ENCODE measurements at regions of chr12 and their contacts with region 1.

Region 1: GRCh38 chr12:52879394-52880351 is 25.2 kb downstream of the KRT8 start:
- DNase-seq: peak; percentile 59 to 86 (median 70)
- ATAC-seq: peak; percentile 96
- H3K4me3 ChIP-seq: peak overlapping the region; percentile 33
- H3K4me3 Mint-ChIP-seq: peak overlapping the region; percentile 63
- H3K27ac ChIP-seq: no peak overlapping the region
- H3K27ac Mint-ChIP-seq: no peak overlapping the region
- H3K4me1 ChIP-seq: peaks cover 16% of the 10 kb centered on the region
- H3K4me1 Mint-ChIP-seq: peaks cover 12% of the 10 kb centered on the region
- H3K27me3 ChIP-seq: peaks cover 0 to 6% of the 10 kb centered on the region in 2 experiments
- H3K27me3 Mint-ChIP-seq: peaks cover 5% of the 10 kb centered on the region
- CTCF ChIP-seq: peak; percentile 92

Region 2: DNA sequence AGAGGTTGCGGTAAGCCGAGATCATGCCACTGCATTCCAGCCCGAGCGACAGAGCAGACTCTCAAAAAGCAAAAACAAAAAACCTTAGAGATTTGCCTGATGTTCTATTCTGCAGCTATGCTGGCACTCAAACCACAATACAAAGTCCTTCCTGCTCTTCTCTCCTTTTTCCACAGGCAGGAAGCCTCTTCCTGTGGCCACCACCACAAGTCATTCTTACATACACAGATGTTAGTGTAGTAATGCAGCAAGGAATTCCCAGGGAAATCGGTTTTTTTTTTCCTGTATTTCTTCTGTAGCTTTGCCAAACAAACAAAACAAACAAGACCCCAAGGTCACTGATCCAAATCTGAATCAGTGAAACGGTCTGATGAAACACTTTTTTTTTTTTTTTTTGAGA is 1135.4 kb before region 1 on chr12:
- CTCF ChIA-PET with region 1: no interaction called
- POLR2A ChIA-PET with region 1: no interaction called
- intact Hi-C with region 1: no loop called
- DNase-seq: no peak
- ATAC-seq: no peak
- H3K4me3 ChIP-seq: no peak overlapping the region
- H3K4me3 Mint-ChIP-seq: no peak overlapping the region
- H3K27ac ChIP-seq: no peak overlapping the region
- H3K27ac Mint-ChIP-seq: no peak overlapping the region
- H3K4me1 ChIP-seq: no peaks in the 10 kb centered on the region
- H3K4me1 Mint-ChIP-seq: no peaks in the 10 kb centered on the region
- H3K27me3 ChIP-seq: peaks cover 0 to 2% of the 10 kb centered on the region in 2 experiments
- H3K27me3 Mint-ChIP-seq: peaks cover 35% of the 10 kb centered on the region
- CTCF ChIP-seq: no peak

Region 3: GRCh38 chr12:51863933-51864832 is 1015.5 kb before region 1 on chr12:
- CTCF ChIA-PET with region 1: no interaction called
- POLR2A ChIA-PET with region 1: no interaction called
- intact Hi-C with region 1: no loop called
- DNase-seq: peak in 3 of 14 experiments; percentile 19 to 44 (median 39)
- ATAC-seq: peak; percentile 78
- H3K4me3 ChIP-seq: peak overlapping the region; percentile 42
- H3K4me3 Mint-ChIP-seq: peak overlapping the region; percentile 34
- H3K27ac ChIP-seq: no peak overlapping the region
- H3K27ac Mint-ChIP-seq: no peak overlapping the region
- H3K4me1 ChIP-seq: peaks cover 25% of the 10 kb centered on the region
- H3K4me1 Mint-ChIP-seq: peaks cover 13% of the 10 kb centered on the region
- H3K27me3 ChIP-seq: peaks cover 49 to 66% of the 10 kb centered on the region in 2 experiments
- H3K27me3 Mint-ChIP-seq: peaks cover 80% of the 10 kb centered on the region
- CTCF ChIP-seq: no peak

Region 4: DNA sequence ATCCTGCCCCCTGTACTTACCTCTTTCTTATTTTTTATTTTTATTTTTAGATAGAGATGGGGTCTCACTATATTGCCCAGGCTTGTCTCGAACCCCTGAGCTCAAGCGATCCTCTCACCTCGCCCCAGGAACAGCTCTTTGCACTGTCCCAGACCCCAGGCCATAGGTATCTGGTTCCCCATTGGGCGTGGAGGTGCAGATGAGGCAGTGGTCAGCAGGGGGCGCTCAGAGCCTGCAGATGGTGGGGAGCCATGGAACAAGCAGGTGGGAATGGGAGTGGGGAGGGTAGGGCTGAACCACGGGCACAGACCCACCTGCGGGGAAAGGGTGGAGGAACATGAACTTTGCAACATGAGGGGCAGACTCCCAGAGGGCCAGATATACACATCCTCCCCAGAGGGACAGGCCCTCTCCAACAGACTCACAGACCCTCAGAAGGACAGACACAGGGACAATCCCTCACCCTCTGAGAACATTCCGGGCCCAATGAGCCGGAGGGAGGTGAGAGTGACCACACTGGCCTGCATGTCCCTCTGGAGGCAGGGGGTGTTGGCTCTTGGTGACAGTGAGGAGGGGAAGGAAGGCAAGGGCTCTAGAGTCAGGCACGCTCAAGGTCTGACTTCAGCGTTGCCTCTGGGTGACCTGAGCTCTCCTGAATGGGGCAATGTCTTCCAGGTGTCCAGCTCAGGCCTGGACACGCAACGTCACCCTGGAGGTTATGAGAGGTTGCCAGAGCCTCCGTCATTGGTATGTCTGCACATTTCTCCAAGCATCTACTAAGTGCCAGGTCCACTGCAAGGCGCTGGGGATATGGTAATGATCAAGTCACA is 722.7 kb before region 1 on chr12:
- CTCF ChIA-PET with region 1: interaction called, 3 read pairs
- POLR2A ChIA-PET with region 1: no interaction called
- intact Hi-C with region 1: loop called (anchors 1 to 2 kb)
- DNase-seq: peak; percentile 57 to 84 (median 70)
- ATAC-seq: peak; percentile 26
- H3K4me3 ChIP-seq: no peak overlapping the region
- H3K4me3 Mint-ChIP-seq: no peak overlapping the region
- H3K27ac ChIP-seq: no peak overlapping the region
- H3K27ac Mint-ChIP-seq: peak overlapping the region; percentile 1
- H3K4me1 ChIP-seq: peaks cover 65% of the 10 kb centered on the region
- H3K4me1 Mint-ChIP-seq: peaks cover 42% of the 10 kb centered on the region
- H3K27me3 ChIP-seq: no peaks in the 10 kb centered on the region
- H3K27me3 Mint-ChIP-seq: no peaks in the 10 kb centered on the region
- CTCF ChIP-seq: peak; percentile 90

Region 5: DNA sequence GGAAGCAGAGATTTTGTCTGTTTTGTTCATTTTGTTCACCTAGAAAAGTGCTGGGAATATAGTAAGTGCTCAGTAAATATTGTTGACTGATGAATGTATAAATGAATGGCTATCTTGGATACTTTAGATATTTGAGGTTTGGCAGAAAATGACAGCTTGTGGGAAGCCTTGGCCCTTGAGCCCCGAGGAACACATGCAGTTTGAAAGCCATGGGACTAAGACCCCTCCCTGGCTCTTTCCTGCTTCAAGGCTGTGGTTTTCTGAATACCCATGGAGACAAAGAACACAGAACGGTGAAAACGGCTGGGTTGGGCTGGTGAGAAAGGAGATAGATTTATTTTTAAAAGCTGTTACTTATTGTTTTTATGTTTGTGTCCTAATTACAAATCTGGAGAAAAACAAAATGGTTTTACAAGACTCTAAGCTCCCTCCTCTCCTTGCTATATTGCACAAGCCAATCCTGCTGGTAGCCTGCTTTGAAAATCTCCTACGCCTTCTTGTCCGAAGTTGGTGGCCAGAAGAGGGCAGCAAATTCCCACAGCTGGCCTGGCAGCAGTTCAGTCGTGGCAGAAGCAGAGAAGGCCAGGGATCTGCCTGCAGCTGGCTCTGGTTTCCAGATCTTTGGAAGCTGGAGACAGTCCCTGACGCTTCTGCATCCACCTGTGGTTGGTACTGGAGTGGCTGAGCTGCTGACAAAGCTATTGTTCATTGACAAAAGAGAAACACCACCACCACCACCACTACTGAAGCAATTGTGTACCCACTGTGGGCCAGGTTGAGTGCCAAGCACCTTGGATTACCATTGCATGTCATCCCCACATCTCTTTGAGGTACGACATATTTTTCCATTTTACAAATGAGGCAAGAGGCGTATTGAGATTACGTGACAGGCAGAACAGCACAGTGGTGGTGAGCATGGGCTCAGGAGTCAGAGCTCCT is 507.2 kb before region 1 on chr12:
- CTCF ChIA-PET with region 1: interaction called, 3 read pairs
- POLR2A ChIA-PET with region 1: no interaction called
- intact Hi-C with region 1: loop called (anchors 1 kb)
- DNase-seq: peak; percentile 14 to 71 (median 46)
- ATAC-seq: no peak
- H3K4me3 ChIP-seq: no peak overlapping the region
- H3K4me3 Mint-ChIP-seq: no peak overlapping the region
- H3K27ac ChIP-seq: no peak overlapping the region
- H3K27ac Mint-ChIP-seq: no peak overlapping the region
- H3K4me1 ChIP-seq: no peaks in the 10 kb centered on the region
- H3K4me1 Mint-ChIP-seq: no peaks in the 10 kb centered on the region
- H3K27me3 ChIP-seq: peaks cover 2 to 4% of the 10 kb centered on the region in 2 experiments
- H3K27me3 Mint-ChIP-seq: peaks cover 24% of the 10 kb centered on the region
- CTCF ChIP-seq: peak; percentile 53

Region 6: GRCh38 chr12:52542157-52542556 is 337.5 kb before region 1 on chr12:
- CTCF ChIA-PET with region 1: no interaction called
- POLR2A ChIA-PET with region 1: no interaction called
- intact Hi-C with region 1: loop called in 1 of 2 experiments (anchors 1 kb)
- DNase-seq: no peak
- ATAC-seq: no peak
- H3K4me3 ChIP-seq: no peak overlapping the region
- H3K4me3 Mint-ChIP-seq: no peak overlapping the region
- H3K27ac ChIP-seq: no peak overlapping the region
- H3K27ac Mint-ChIP-seq: no peak overlapping the region
- H3K4me1 ChIP-seq: no peaks in the 10 kb centered on the region
- H3K4me1 Mint-ChIP-seq: no peaks in the 10 kb centered on the region
- H3K27me3 ChIP-seq: peaks cover 0 to 3% of the 10 kb centered on the region in 2 experiments
- H3K27me3 Mint-ChIP-seq: no peaks in the 10 kb centered on the region
- CTCF ChIP-seq: no peak

Region 7: GRCh38 chr12:52691076-52691840 is 188.4 kb before region 1 on chr12:
- CTCF ChIA-PET with region 1: interaction called, 4 read pairs
- POLR2A ChIA-PET with region 1: no interaction called
- intact Hi-C with region 1: loop called in 1 of 2 experiments (anchors 10 kb)
- DNase-seq: peak; percentile 43 to 77 (median 64)
- ATAC-seq: peak; percentile 87
- H3K4me3 ChIP-seq: peak overlapping the region; percentile 55
- H3K4me3 Mint-ChIP-seq: peak overlapping the region; percentile 83
- H3K27ac ChIP-seq: no peak overlapping the region
- H3K27ac Mint-ChIP-seq: peak overlapping the region; percentile 87
- H3K4me1 ChIP-seq: peaks cover 32% of the 10 kb centered on the region
- H3K4me1 Mint-ChIP-seq: peaks cover 64% of the 10 kb centered on the region
- H3K27me3 ChIP-seq: no peaks in the 10 kb centered on the region
- H3K27me3 Mint-ChIP-seq: no peaks in the 10 kb centered on the region
- CTCF ChIP-seq: no peak

Region 8: GRCh38 chr12:52914576-52915121 is 35.0 kb after region 1 on chr12:
- CTCF ChIA-PET with region 1: no interaction called
- POLR2A ChIA-PET with region 1: no interaction called
- intact Hi-C with region 1: no loop called
- DNase-seq: no peak
- ATAC-seq: no peak
- H3K4me3 ChIP-seq: no peak overlapping the region
- H3K4me3 Mint-ChIP-seq: no peak overlapping the region
- H3K27ac ChIP-seq: no peak overlapping the region
- H3K27ac Mint-ChIP-seq: no peak overlapping the region
- H3K4me1 ChIP-seq: no peaks in the 10 kb centered on the region
- H3K4me1 Mint-ChIP-seq: no peaks in the 10 kb centered on the region
- H3K27me3 ChIP-seq: no peaks in the 10 kb centered on the region
- H3K27me3 Mint-ChIP-seq: peaks cover 4% of the 10 kb centered on the region
- CTCF ChIP-seq: no peak